ENCODE measurements at regions of chrX and their contacts with region 1.

Region 1: DNA sequence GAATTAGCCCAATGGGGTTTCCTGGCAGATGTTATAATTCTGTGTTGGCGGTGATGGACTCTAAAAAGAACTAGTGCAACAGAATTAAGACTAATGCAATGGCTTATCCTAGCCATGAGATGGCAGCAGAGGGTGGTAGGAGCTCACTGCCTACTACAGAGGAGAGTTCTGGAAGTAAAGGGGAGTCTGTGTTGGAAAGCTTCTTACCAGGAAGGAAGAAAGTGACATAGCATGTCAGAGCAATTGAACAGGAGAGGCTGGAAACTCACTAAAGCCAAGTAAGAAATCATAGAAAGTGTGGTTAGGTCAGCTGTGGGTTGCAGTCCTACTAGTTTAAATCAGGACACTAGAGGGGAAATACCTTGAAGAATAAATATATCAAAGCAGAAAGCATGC is 6.3 kb upstream of the TRPC5OS start:
- DNase-seq: no peak
- H3K4me3 ChIP-seq: no peak overlapping the region
- H3K27ac ChIP-seq: no peak overlapping the region
- H3K4me1 ChIP-seq: peaks cover 0 to 3% (median 0%) of the 10 kb centered on the region in 6 donors
- H3K27me3 ChIP-seq: peaks cover 0 to 31% (median 0%) of the 10 kb centered on the region in 7 donors
- CTCF ChIP-seq: peak in 10 of 11 experiments; percentile 23 to 61 (median 49)
- POLR2A ChIP-seq: no peak

Region 2: DNA sequence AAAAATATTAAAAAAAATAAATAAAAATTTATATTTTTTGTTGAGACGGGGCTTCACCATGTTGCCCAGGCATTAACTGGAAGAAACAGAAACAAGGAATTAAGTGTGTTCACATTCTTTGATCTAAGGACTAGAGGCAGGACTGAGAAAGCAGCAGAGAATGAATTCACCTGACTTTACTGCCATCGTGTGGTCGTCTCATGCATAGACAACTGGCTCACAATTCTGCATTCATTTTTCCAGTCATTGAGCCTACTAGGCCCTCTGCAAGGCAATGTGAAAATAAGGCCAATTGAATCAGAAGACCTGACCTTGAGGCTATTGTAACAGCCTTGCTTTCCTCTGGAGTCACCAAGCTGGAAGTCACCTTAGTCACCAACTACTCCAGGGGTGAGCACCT is 772.7 kb after region 1 on chrX:
- intact Hi-C with region 1: loop called (anchors 10 kb)
- DNase-seq: no peak
- H3K4me3 ChIP-seq: no peak overlapping the region
- H3K27ac ChIP-seq: no peak overlapping the region
- H3K4me1 ChIP-seq: no peaks in the 10 kb centered on the region
- H3K27me3 ChIP-seq: peaks cover 0 to 6% (median 0%) of the 10 kb centered on the region in 7 donors
- CTCF ChIP-seq: peak; percentile 19 to 69 (median 60)
- POLR2A ChIP-seq: no peak